ENCODE measurements at regions of chr20 and their contacts with region 1.

Region 1: GRCh38 chr20:50561379-50562078 is 51.3 kb downstream of the PTPN1 start:
- DNase-seq: peak; percentile 86
- H3K4me3 Mint-ChIP-seq: peak overlapping the region; percentile 82
- H3K27ac Mint-ChIP-seq: peak overlapping the region; percentile 97
- H3K4me1 Mint-ChIP-seq: peaks cover 88% of the 10 kb centered on the region
- H3K27me3 Mint-ChIP-seq: no peaks in the 10 kb centered on the region

Region 2: DNA sequence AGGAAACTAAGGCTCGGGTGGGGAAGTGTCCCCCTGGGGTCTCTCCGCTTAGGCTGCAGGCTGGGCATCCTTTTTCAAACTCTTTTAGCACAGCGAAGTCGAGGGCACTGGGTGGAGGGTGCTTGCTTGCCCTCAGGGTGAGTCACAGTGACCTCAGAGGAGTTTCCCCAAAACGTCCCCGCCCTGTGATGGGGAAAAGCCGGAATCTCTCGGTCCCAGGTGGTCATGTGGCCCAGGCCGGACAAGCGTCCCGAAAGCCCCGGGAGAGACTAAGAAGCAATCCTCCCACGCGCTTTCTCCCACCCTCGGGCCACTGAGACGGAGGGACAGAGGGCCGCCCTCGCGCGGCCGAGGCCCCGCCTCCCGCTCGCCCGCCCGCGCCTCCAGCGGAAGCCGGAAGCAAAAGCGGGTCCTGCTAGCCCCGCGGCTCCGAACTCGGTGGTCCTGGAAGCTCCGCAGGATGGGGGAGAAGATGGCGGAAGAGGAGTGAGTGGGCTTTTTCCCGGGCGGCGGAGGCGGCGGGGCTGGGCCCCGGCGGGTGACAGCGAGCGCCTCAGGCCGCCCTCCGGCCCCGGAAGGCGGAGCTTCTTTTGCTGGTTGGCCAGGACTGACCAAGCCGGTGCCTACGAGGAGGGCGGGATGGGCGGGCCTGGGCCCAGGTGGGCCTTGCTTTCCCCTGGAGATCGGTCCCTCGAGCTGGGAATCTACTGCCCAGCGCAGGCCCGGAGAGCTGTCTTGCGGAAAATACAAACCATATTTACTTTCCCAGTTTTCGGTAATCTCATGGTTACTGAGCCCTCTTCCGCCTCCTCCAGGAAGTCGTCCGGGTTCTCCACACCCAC is 748.8 kb before region 1 on chr20 and contains the start of gene SLC9A8:
- CTCF ChIA-PET with region 1: no interaction called
- POLR2A ChIA-PET with region 1: no interaction called
- intact Hi-C with region 1: loop called (anchors 5 kb)
- DNase-seq: peak; percentile 92
- H3K4me3 Mint-ChIP-seq: peak within 1 kb of the TSS; percentile 89
- H3K27ac Mint-ChIP-seq: peak within 1 kb of the TSS; percentile 94
- H3K4me1 Mint-ChIP-seq: peaks cover 34% of the 10 kb centered on the region
- H3K27me3 Mint-ChIP-seq: no peaks in the 10 kb centered on the region
- total RNA-seq, gene SLC9A8: 11.5 to 13.0 TPM

Region 3: GRCh38 chr20:50144362-50144761 is 417.2 kb before region 1 on chr20:
- CTCF ChIA-PET with region 1: no interaction called
- POLR2A ChIA-PET with region 1: no interaction called
- intact Hi-C with region 1: no loop called
- DNase-seq: no peak
- H3K4me3 Mint-ChIP-seq: no peak overlapping the region
- H3K27ac Mint-ChIP-seq: no peak overlapping the region
- H3K4me1 Mint-ChIP-seq: peaks cover 49% of the 10 kb centered on the region
- H3K27me3 Mint-ChIP-seq: no peaks in the 10 kb centered on the region

Region 4: DNA sequence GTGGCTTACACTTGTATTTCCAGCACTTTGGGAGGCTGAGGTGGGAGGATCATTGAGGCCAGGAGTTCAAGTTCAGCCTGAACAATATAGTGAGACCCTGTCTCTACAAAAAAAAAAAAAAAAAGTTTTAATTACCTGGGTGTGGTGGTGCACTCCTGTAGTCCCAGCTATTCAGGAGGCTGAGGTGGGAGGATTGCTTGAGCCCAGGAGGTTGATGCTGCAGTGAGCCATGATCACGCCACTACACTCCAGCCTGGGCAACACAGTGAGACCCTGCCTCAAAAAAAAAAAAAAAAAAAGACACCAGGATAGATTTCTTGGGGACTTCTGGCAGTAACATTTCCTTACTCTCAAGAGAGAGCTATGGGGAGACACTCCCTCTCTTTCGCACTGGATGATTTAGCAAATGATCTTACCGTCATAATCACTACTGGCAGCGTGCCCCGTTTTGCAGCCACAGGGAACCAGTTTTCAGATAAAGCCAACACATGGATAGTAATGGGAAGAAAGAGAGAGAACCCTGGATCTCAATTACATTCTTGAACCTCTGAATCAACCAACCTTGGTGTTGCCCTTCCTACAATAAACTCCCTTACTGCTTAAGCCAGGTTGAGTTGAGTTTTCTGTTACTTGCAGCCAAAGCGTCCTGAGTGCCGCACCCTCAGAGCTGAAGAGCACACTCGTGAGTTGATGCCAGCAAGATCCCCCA is 69.4 kb before region 1 on chr20:
- CTCF ChIA-PET with region 1: no interaction called
- POLR2A ChIA-PET with region 1: interaction called, 7 read pairs
- intact Hi-C with region 1: loop called (anchors 2 kb)
- DNase-seq: no peak
- H3K4me3 Mint-ChIP-seq: no peak overlapping the region
- H3K27ac Mint-ChIP-seq: peak overlapping the region; percentile 88
- H3K4me1 Mint-ChIP-seq: peaks cover 38% of the 10 kb centered on the region
- H3K27me3 Mint-ChIP-seq: no peaks in the 10 kb centered on the region

Region 5: DNA sequence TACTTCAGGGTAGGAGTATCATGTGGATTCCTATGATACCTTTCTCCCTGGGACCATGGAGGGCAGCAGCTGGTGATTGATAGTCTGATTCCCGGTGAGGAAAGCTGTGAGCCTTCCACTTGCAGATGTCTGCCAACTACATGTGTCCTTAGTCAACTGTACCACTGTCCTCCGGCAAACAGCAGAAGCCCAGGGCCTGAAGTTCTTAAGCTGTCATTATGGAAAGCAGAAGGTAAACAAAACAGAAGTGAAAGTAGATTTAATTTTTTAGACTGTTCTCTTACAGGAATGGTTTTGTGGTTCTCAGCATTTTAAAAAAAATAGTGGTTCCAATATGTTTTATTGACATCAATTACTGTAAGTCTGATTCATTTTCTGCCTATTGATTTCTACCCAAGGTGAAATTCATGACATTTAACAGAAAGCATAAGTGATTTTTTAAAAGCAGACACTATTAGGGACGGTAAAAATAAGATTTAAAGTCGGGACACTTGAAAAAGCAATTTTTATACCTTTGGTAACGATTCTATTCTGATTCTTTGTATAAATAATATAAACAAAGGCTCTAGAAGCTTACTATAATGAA is 14.7 kb before region 1 on chr20:
- CTCF ChIA-PET with region 1: interaction called, 10 read pairs
- POLR2A ChIA-PET with region 1: interaction called, 56 read pairs
- intact Hi-C with region 1: loop called (anchors 1 kb)
- DNase-seq: peak; percentile 53
- H3K4me3 Mint-ChIP-seq: peak overlapping the region; percentile 73
- H3K27ac Mint-ChIP-seq: peak overlapping the region; percentile 80
- H3K4me1 Mint-ChIP-seq: peaks cover 67% of the 10 kb centered on the region
- H3K27me3 Mint-ChIP-seq: no peaks in the 10 kb centered on the region